Esophagus squamous epithelium (tissue), 5 donors: ENCODE measurements at regions of chr12 and their contacts with region 1.

Region 1: DNA sequence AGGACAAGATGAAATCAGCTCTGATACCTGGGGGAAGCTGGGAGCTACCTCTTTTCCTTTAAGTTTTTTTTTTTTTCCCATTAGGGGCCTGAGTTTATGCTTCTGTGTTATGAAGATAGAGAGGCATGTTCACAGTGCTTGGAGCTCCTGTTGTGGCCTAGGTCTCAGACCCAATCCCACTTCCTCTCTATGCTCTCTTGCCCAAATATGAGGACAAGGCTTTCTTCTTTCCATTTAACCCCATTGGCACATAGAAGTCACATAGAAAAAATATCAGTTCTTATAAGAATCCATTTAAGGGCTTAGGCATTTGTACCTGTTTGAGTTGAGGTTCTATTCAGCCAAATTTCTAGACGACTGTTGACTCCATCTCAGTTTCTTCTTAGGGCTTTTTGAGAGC is 12.6 kb downstream of the MRPS35 start:
- DNase-seq: no peak
- H3K4me3 ChIP-seq: no peak overlapping the region
- H3K27ac ChIP-seq: no peak overlapping the region
- H3K4me1 ChIP-seq: no peaks in the 10 kb centered on the region
- H3K27me3 ChIP-seq: no peaks in the 10 kb centered on the region
- CTCF ChIP-seq: no peak
- POLR2A ChIP-seq: no peak

Region 2: DNA sequence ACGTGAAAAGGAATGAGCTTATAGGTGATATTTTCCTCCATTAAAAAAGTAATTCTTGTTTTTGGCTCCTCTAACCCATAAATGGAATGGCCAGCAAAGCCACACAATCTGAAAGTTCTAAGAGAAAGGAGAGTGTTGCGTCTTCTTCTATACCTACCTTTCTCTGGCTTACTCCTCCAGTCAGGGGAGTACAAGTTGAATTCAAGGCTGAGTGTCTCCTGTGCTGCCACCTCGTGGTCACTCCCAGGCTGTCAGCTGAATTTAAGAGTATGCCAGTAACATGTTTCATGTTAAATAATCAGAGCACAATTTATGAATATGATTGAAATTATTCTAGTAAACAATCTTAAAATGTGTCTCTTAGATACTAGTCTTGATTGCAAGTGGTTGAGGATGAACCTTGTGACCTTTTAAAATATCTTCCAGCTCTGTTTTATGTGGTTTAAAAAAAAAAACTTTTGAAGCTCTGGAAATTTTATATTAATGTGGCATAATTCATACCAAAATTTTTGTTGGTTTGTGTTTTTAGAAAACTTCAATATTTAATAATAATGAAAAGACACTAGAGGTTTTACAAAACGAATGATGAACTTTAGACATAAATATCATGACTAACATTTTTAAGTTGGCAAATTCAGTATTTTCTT is 217.7 kb after region 1 on chr12:
- intact Hi-C with region 1: loop called (anchors 10 kb)
- DNase-seq: peak; percentile 3
- H3K4me3 ChIP-seq: no peak overlapping the region
- H3K27ac ChIP-seq: no peak overlapping the region
- H3K4me1 ChIP-seq: no peaks in the 10 kb centered on the region
- H3K27me3 ChIP-seq: no peaks in the 10 kb centered on the region
- CTCF ChIP-seq: peak; percentile 53 to 86 (median 76)
- POLR2A ChIP-seq: no peak